PC-3 (cell line): ENCODE measurements at regions of chr10 and their contacts with region 1.

Region 1: DNA sequence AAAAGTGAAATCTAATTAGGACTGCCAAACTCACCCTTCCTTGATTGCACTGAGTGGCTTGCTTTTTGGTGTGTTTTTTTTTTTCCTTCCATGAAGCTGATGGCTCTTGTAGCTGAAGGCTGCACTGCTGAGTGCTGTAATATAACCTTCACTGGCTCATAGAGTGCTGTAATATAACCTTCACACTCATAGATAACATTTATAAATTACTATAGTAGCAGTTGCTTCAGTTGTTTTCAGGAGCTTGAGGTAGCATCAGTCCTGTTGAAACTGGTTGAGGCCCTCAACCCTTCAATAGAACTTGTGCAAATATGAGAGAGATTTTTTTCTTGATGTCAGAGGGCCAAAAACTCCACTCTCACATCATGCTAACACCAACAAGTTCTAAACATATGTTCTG is 404.9 kb upstream of the MBL2 start:
- DNase-seq: no peak
- ATAC-seq: peak; percentile 31; the same call in 1 of the 2 replicates
- H3K4me3 ChIP-seq: no peak overlapping the region
- H3K27ac ChIP-seq: no peak overlapping the region
- H3K4me1 ChIP-seq: no peaks in the 10 kb centered on the region
- H3K27me3 ChIP-seq: no peaks in the 10 kb centered on the region
- CTCF ChIP-seq: no peak

Region 2: GRCh38 chr10:53284615-53285177 is 107.2 kb after region 1 on chr10:
- CTCF ChIA-PET with region 1: no interaction called
- POLR2A ChIA-PET with region 1: no interaction called
- intact Hi-C with region 1: no loop called
- DNase-seq: peak; percentile 78
- ATAC-seq: peak; percentile 90
- H3K4me3 ChIP-seq: no peak overlapping the region
- H3K27ac ChIP-seq: no peak overlapping the region
- H3K4me1 ChIP-seq: peaks cover 8% of the 10 kb centered on the region
- H3K27me3 ChIP-seq: no peaks in the 10 kb centered on the region
- CTCF ChIP-seq: no peak

Region 3: DNA sequence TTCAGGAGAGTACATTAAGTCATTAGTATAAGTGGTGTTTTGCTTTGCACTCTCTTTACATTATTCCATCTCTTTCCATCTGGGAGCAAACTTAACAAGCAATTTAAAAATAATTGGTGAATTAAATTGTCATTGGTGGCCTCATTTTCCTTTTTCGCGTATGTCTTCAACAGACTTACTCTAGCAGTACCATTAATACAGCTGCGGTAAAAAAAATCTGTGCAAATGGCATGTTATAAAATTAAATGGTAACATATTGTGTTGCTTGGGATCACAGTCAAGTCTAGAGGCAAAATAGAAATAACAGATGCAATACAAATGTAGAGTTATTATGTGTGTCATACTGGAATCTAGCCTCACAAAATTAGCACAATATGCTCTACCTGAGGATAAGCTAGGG is 1301.1 kb after region 1 on chr10:
- CTCF ChIA-PET with region 1: no interaction called
- POLR2A ChIA-PET with region 1: interaction called, 20 read pairs
- intact Hi-C with region 1: no loop called
- DNase-seq: no peak
- ATAC-seq: no peak
- H3K4me3 ChIP-seq: no peak overlapping the region
- H3K27ac ChIP-seq: no peak overlapping the region
- H3K4me1 ChIP-seq: no peaks in the 10 kb centered on the region
- H3K27me3 ChIP-seq: no peaks in the 10 kb centered on the region
- CTCF ChIP-seq: no peak